Activated T-helper 1 cell treated with anti-CD3 and anti-CD28 coated beads, Interleukin-12 subunit alpha, Interleukin-12 subunit beta, Interleukin-2, Interleukin-4 antibody, amounts not matched to agents 30 ng/mL and 10 ng/mL and 1 ng/mL, durations not matched to agents 14 hours and 24 hours and 36 hours (primary cell): ENCODE measurements at regions of chr16 and their contacts with region 1.

Region 1: GRCh38 chr16:86519649-86520316 is 9.5 kb downstream of the FOXF1 start:
- DNase-seq: peak; percentile 47
- H3K4me3 Mint-ChIP-seq: peak overlapping the region; percentile 58
- H3K27ac Mint-ChIP-seq: no peak overlapping the region
- H3K4me1 Mint-ChIP-seq: no peaks in the 10 kb centered on the region
- H3K27me3 Mint-ChIP-seq: peaks cover 30% of the 10 kb centered on the region

Region 2: GRCh38 chr16:85821441-85822135 is 698.2 kb before region 1 on chr16:
- intact Hi-C with region 1: loop called (anchors 1 kb)
- DNase-seq: peak; percentile 68
- H3K4me3 Mint-ChIP-seq: no peak overlapping the region
- H3K27ac Mint-ChIP-seq: no peak overlapping the region
- H3K4me1 Mint-ChIP-seq: no peaks in the 10 kb centered on the region
- H3K27me3 Mint-ChIP-seq: peaks cover 8% of the 10 kb centered on the region

Region 3: GRCh38 chr16:86072328-86073102 is 447.3 kb before region 1 on chr16:
- intact Hi-C with region 1: loop called (anchors 1 kb)
- DNase-seq: no peak
- H3K4me3 Mint-ChIP-seq: no peak overlapping the region
- H3K27ac Mint-ChIP-seq: no peak overlapping the region
- H3K4me1 Mint-ChIP-seq: no peaks in the 10 kb centered on the region
- H3K27me3 Mint-ChIP-seq: peaks cover 8% of the 10 kb centered on the region

Region 4: DNA sequence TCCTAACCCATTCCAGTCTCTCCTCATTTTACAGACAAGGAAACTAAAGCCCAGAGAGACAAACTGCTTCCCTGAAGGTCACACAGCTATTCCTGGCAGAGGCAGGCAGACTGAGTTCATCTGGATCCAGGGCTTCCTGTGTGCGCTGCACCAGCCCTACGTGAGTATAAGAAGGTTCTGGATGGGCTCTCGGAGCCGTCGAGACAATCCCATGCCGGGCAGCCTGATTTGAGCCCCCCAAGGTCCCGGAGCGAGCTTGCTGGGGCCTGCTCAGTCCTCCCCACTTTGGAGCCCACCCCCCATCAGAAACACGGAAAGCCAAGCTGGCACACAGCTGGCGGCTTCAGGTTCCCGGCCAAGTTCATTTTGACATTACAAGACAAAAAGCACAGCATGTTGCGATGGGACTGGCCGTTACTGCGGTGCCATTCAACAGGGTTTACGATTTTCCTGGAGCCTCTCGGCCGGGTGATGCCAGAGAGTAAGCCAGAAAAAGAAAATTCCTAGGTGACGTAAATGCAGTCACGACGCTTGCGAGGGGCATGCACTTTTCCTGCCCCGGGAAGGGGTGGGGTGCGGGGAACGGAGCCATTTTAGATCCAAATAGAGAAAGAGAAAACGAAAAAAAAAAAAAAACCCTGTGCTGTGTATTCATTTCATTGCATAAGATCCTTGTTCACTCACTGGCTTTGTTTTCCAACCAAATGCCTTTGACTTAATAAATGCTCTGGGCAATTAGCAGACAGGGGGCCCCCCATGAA is 176.6 kb before region 1 on chr16:
- intact Hi-C with region 1: loop called (anchors 1 kb)
- DNase-seq: no peak
- H3K4me3 Mint-ChIP-seq: no peak overlapping the region
- H3K27ac Mint-ChIP-seq: no peak overlapping the region
- H3K4me1 Mint-ChIP-seq: no peaks in the 10 kb centered on the region
- H3K27me3 Mint-ChIP-seq: peaks cover 20% of the 10 kb centered on the region

Region 5: GRCh38 chr16:86498661-86499439 is 20.9 kb before region 1 on chr16:
- intact Hi-C with region 1: loop called (anchors 2 kb)
- DNase-seq: no peak
- H3K4me3 Mint-ChIP-seq: no peak overlapping the region
- H3K27ac Mint-ChIP-seq: peak overlapping the region; percentile 48
- H3K4me1 Mint-ChIP-seq: no peaks in the 10 kb centered on the region
- H3K27me3 Mint-ChIP-seq: peaks cover 80% of the 10 kb centered on the region

Region 6: DNA sequence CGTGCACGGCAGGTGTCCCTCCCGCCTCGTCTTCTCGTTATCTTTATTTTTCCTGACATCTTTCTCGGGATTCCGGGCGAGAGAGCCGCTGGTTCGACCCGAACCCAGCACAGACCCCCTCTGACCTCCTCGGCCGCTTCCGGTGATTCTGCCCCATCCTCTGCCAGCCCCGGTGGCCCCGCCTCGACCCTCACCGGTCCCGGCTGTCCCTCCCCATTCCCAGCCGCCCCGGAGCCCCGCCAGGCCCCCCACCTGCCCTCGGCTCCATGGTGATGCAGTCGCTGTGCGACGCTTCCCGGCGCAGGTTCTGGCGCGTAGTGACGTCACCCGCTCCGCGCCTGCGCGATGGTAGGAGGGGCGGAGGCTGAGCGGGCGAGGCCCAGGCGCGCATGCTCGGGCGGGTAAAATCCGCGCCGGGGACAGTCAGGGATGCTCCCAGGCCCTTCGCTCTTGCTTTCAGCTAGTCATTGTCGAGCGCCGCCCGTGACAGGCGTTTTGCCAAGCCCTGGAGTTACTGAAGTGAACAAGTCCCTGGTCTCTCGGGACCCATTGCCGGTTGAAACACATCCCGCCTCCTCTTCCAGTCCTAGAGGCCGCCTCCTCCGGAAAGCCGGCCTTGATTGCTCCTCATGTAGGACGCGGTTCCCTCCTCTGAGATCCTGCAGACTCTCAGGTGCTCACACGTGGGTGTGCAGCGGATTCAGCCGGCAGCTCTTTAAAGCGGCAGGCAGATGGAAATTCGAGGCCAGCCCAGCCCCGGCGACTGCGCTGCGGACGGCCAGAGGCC is 35.3 kb after region 1 on chr16 and contains the start of gene MTHFSD:
- intact Hi-C with region 1: loop called (anchors 1 kb)
- DNase-seq: peak; percentile 94
- H3K4me3 Mint-ChIP-seq: peak within 1 kb of the TSS; percentile 86
- H3K27ac Mint-ChIP-seq: peak within 1 kb of the TSS; percentile 95
- H3K4me1 Mint-ChIP-seq: peaks cover 20% of the 10 kb centered on the region
- H3K27me3 Mint-ChIP-seq: peaks cover 5% of the 10 kb centered on the region
- total RNA-seq, gene MTHFSD: 30.6 and 31.8 TPM in 2 replicates

Region 7: DNA sequence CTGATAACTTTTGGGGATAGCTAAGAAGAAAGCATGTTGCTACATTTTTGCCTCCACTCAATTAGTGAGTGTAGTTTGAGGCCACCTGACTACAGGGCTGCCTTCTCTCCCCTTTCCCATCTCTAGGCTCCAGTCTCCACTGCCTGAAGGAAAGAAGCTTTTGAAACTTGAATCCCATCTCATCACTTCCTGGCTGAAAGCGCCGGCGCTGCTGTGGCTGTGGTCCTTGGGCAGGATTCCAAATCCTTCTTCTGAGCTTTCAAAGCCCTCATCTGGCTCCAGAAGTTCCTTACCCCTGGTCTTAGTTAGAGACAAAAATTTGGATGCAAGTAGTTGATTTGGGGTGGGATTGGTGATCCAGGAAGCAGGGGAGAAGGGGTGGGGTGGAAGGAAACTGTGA is 177.9 kb after region 1 on chr16:
- intact Hi-C with region 1: no loop called
- DNase-seq: no peak
- H3K4me3 Mint-ChIP-seq: no peak overlapping the region
- H3K27ac Mint-ChIP-seq: no peak overlapping the region
- H3K4me1 Mint-ChIP-seq: no peaks in the 10 kb centered on the region
- H3K27me3 Mint-ChIP-seq: peaks cover 7% of the 10 kb centered on the region